ENCODE measurements at regions of chr10 and their contacts with region 1.

Region 1: DNA sequence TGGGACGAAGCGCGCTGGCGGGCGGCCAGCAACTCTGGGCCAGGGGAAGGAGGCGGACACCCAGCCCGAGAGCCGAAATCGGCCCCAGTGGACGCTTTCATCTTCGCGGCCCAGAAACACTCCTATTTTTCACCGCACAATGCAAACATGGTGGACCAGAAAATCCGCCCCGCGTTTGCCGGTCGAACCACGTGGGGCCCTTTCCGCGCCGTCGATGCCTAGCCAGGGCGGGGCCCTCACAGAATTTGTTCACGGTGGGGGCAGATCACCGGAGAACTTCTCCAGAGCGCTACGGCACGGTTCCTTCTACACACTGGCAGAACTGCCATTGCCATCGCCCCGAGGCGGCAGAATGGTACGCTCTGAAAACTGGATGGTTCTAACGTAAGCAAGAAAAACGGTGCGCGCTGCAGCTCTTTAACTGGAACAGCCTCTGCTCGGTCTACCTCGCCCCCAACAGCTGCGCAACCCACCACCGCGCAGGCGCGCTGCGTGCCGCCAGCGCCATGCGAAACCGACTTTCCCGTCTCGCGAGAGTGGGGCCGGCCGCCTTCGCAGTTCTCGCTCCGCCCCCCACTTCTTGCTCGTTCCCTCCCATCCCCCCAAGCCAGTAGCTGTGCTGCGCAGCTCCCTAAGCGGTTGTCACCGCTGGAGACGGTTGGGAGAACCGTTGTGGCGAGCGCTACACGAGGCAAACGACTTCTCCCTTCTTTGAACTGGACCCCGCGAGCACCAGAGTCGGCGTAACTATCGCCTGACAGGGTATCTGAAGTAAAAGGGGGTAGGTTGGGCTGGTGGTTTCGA is at the start of gene HNRNPH3:
- H3K4me3 ChIP-seq: peak within 1 kb of the TSS; percentile 89
- H3K27ac ChIP-seq: peak within 1 kb of the TSS; percentile 97
- H3K4me1 ChIP-seq: peaks cover 9% of the 10 kb centered on the region
- CTCF ChIP-seq: peak; percentile 25; the same call in 1 of the 2 replicates

Region 2: GRCh38 chr10:67884313-67884841 is 447.3 kb before region 1 on chr10 and contains the start of gene SIRT1:
- CTCF ChIA-PET with region 1: interaction called, 5 read pairs
- POLR2A ChIA-PET with region 1: interaction called, 10 read pairs
- H3K4me3 ChIP-seq: peak within 1 kb of the TSS; percentile 75
- H3K27ac ChIP-seq: peak within 1 kb of the TSS; percentile 98
- H3K4me1 ChIP-seq: peaks cover 5% of the 10 kb centered on the region; the same call in 1 of the 2 replicates
- CTCF ChIP-seq: peak; percentile 47; the same call in 1 of the 2 replicates

Region 3: DNA sequence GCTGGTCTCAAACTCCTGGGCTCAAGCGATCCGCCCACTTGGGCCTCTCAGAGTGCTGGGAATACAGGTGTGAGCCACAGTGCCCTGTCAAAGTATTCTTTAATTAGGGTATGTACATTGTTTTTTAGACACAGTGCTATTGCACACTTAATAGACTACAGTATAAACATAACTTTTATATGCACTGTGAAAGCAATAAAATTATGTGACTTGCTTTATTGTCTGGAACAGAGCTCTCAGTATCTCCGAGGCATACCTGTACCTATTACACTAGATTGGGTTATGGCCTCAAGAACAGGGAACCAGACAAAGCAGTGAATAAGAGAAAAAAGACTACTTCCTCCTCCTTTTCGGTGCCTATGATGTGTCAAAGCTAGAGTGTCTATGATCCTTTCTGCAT is 112.9 kb before region 1 on chr10:
- CTCF ChIA-PET with region 1: no interaction called
- POLR2A ChIA-PET with region 1: no interaction called
- H3K4me3 ChIP-seq: no peak overlapping the region
- H3K27ac ChIP-seq: no peak overlapping the region
- H3K4me1 ChIP-seq: no peaks in the 10 kb centered on the region
- CTCF ChIP-seq: no peak

Region 4: DNA sequence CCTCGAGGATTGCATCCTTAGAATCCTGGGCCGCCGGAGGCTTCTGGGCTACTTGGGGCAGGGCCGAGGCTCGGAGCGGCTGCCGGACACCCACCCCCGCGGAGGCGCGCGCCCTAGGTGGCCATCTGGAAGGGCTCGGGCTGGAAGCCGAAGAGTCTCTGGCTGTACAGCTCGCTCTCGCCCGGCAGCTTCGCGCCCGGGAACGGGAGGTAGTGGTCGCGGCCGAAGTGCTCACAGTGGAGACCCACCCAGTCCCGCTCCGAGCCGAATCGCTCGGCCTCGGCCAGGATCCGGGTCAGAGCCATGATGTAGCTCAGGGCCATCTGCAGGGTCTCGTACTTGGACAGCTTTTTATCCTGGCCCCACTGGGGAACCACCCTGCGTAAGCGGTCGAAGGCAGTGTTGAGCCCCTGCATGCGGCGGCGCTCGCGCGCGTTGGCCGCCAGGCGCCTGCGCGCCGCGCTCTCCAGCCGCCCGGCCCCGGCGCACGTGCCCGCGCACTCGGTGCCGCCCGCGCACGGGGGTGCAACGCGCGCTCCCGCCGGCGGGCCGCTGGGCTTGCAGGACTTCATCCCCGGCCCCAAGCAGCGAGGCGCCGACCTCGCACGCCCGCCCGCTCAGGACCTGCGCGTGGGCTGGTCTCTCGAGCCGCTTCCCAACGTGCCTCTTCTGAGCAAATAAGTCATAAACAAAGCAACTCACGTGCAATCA is 100.4 kb before region 1 on chr10:
- CTCF ChIA-PET with region 1: no interaction called
- POLR2A ChIA-PET with region 1: interaction called, 11 read pairs
- H3K4me3 ChIP-seq: peak overlapping the region; percentile 54
- H3K27ac ChIP-seq: peak overlapping the region; percentile 68; the same call in 1 of the 2 replicates
- H3K4me1 ChIP-seq: peaks cover 3% of the 10 kb centered on the region; the same call in 1 of the 2 replicates
- CTCF ChIP-seq: peak; percentile 65

Region 5: DNA sequence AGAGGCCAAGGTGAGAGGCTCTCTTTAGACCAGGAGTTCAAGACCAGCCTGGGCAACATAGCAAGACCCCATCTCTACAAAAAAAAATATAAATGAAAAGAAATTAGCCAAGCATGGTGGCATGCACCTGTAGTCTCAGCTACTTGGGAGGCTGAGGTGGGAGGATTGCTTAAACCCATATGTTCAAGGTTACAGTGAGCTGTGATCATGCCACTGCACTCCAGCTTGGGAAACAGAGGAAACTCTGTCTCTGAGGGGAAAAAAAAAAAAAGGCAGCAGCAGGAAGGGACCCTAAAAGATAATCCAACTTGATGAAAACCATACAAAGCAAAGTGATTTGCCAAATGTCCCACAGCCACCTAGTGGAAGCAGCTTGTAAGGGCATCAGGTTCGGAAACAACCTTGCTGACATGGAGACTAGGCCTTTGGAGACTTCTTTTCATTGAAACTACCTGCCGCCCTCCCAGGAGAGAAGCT is 16.6 kb after region 1 on chr10:
- CTCF ChIA-PET with region 1: interaction called, 10 read pairs
- POLR2A ChIA-PET with region 1: interaction called, 20 read pairs
- H3K4me3 ChIP-seq: no peak overlapping the region
- H3K27ac ChIP-seq: no peak overlapping the region
- H3K4me1 ChIP-seq: no peaks in the 10 kb centered on the region
- CTCF ChIP-seq: peak; percentile 56; the same call in 1 of the 2 replicates

Measured in HEK293 (cell line).